ENCODE measurements at regions of chr18 and their contacts with region 1.

Region 1: GRCh38 chr18:11089931-11090715 is 59.2 kb downstream of the PIEZO2 start:
- DNase-seq: no peak
- ATAC-seq: no peak
- H3K4me3 ChIP-seq: no peak overlapping the region
- H3K27ac ChIP-seq: no peak overlapping the region
- H3K4me1 ChIP-seq: peaks cover 0 to 8% (median 0%) of the 10 kb centered on the region in 12 donors
- H3K27me3 ChIP-seq: peaks cover 0 to 6% (median 0%) of the 10 kb centered on the region in 9 donors
- CTCF ChIP-seq: no peak
- POLR2A ChIP-seq: no peak

Region 2: DNA sequence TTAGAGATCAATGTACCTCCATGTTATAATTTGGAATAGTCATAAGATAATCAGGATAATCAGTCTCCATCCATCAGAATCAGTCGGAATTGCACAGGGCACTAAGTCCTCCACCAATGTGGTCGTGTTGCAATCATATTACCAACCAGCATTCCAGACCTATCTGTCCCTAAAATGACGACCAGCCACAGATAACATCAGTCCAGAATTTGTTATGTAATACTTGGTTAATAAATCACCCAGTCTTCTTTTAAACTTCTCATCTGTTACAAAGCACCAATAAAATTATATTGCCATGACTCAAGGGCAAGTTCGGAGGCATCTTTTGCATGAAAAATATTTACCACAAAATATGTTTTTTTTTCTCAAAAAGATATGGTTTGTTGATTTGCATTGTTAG is 29.8 kb after region 1 on chr18:
- intact Hi-C with region 1: no loop called
- DNase-seq: no peak
- ATAC-seq: no peak
- H3K4me3 ChIP-seq: no peak overlapping the region
- H3K27ac ChIP-seq: no peak overlapping the region
- H3K4me1 ChIP-seq: no peaks in the 10 kb centered on the region
- H3K27me3 ChIP-seq: peaks cover 0 to 13% (median 0%) of the 10 kb centered on the region in 9 donors
- CTCF ChIP-seq: no peak
- POLR2A ChIP-seq: no peak

Region 3: GRCh38 chr18:11454021-11454420 is 363.9 kb after region 1 on chr18:
- intact Hi-C with region 1: loop called in 1 of 10 experiments (anchors 10 kb)
- DNase-seq: no peak
- ATAC-seq: no peak
- H3K4me3 ChIP-seq: no peak overlapping the region
- H3K27ac ChIP-seq: no peak overlapping the region
- H3K4me1 ChIP-seq: no peaks in the 10 kb centered on the region
- H3K27me3 ChIP-seq: no peaks in the 10 kb centered on the region
- CTCF ChIP-seq: no peak
- POLR2A ChIP-seq: no peak

Measured in heart left ventricle (tissue), 16 donors.